ENCODE measurements at regions of chr15 and their contacts with region 1.

Region 1: GRCh38 chr15:61118885-61119284 is 110.2 kb downstream of the RORA start:
- DNase-seq: peak in 1 of 2 experiments; percentile 21
- H3K4me3 ChIP-seq: no peak overlapping the region
- H3K27ac ChIP-seq: no peak overlapping the region
- H3K4me1 ChIP-seq: peaks cover 0 to 4% (median 2%) of the 10 kb centered on the region in 4 experiments; a peak in 2 of 7 replicates
- H3K27me3 ChIP-seq: no peaks in the 10 kb centered on the region; a peak in 1 of 7 replicates
- CTCF ChIP-seq: peak; percentile 45 to 66 (median 63)
- EP300 ChIP-seq: no peak
- POLR2A ChIP-seq: no peak
- RAD21 ChIP-seq: peak; percentile 25 to 57; a peak in 3 of 4 replicates

Region 2: GRCh38 chr15:61080221-61081026 is 38.5 kb before region 1 on chr15:
- CTCF ChIA-PET with region 1: interaction called, 12 read pairs
- POLR2A ChIA-PET with region 1: no interaction called
- DNase-seq: no peak
- H3K4me3 ChIP-seq: no peak overlapping the region
- H3K27ac ChIP-seq: no peak overlapping the region
- H3K4me1 ChIP-seq: peaks cover 4 to 7% (median 4%) of the 10 kb centered on the region in 4 experiments; a peak in 4 of 7 replicates
- H3K27me3 ChIP-seq: no peaks in the 10 kb centered on the region
- CTCF ChIP-seq: no peak
- EP300 ChIP-seq: no peak
- POLR2A ChIP-seq: no peak
- RAD21 ChIP-seq: no peak

Region 3: GRCh38 chr15:61097043-61097442 is 21.8 kb before region 1 on chr15:
- CTCF ChIA-PET with region 1: interaction called, 10 read pairs
- POLR2A ChIA-PET with region 1: interaction called, 3 read pairs
- DNase-seq: no peak
- H3K4me3 ChIP-seq: no peak overlapping the region
- H3K27ac ChIP-seq: no peak overlapping the region
- H3K4me1 ChIP-seq: no peaks in the 10 kb centered on the region
- H3K27me3 ChIP-seq: no peaks in the 10 kb centered on the region
- CTCF ChIP-seq: no peak
- EP300 ChIP-seq: no peak
- POLR2A ChIP-seq: no peak
- RAD21 ChIP-seq: no peak

Region 4: GRCh38 chr15:61137105-61137792 is 18.4 kb after region 1 on chr15:
- CTCF ChIA-PET with region 1: interaction called, 11 read pairs
- POLR2A ChIA-PET with region 1: no interaction called
- DNase-seq: no peak
- H3K4me3 ChIP-seq: no peak overlapping the region
- H3K27ac ChIP-seq: no peak overlapping the region
- H3K4me1 ChIP-seq: peaks cover 0 to 4% (median 3%) of the 10 kb centered on the region in 4 experiments; a peak in 4 of 7 replicates
- H3K27me3 ChIP-seq: no peaks in the 10 kb centered on the region
- CTCF ChIP-seq: no peak
- EP300 ChIP-seq: no peak
- POLR2A ChIP-seq: no peak
- RAD21 ChIP-seq: no peak

Region 5: DNA sequence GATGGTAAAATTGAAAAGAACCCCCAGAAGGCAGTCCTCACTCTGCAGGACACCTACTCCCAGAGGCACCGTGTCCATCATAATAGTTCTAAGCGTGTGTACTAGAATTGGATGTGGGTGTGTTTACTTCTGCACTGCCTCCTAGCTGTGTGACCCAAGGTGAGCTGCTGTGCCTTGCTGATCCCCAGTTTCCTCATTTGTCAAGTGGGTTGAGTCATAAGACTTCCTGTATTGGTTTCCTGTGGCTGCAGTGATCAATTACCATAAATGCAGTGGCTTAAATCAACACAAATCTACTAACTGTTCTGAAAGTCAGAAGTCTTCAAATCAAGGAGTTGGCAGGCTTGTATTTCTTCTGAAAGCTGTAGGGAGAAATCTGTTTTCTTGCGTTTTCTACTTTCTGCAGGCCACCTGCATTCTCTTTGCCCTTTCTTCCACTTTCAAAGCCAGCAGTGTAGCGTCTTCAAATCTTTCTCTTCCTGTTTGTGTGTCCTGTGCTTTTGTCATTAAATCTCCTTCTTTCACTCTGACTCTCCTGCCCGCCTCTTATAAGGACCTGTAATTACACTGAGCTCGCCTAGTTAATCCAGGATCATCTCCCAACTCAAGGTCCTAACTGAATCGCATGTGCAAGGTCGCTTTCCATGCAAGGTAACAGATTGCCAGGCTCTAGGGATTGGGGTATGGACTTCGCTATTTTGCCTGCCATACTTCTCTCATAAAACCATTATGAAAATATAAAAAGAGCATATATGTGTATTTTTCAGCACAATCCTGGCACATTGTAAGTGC is 51.2 kb after region 1 on chr15:
- CTCF ChIA-PET with region 1: interaction called, 10 read pairs
- POLR2A ChIA-PET with region 1: no interaction called
- DNase-seq: no peak
- H3K4me3 ChIP-seq: no peak overlapping the region
- H3K27ac ChIP-seq: no peak overlapping the region
- H3K4me1 ChIP-seq: peaks cover 10 to 34% (median 29%) of the 10 kb centered on the region in 4 experiments
- H3K27me3 ChIP-seq: no peaks in the 10 kb centered on the region
- CTCF ChIP-seq: no peak
- EP300 ChIP-seq: no peak
- POLR2A ChIP-seq: no peak
- RAD21 ChIP-seq: no peak

Region 6: GRCh38 chr15:61266921-61267320 is 148.0 kb after region 1 on chr15:
- CTCF ChIA-PET with region 1: no interaction called
- POLR2A ChIA-PET with region 1: no interaction called
- DNase-seq: no peak
- H3K4me3 ChIP-seq: no peak overlapping the region
- H3K27ac ChIP-seq: no peak overlapping the region
- H3K4me1 ChIP-seq: no peaks in the 10 kb centered on the region; a peak in 1 of 7 replicates
- H3K27me3 ChIP-seq: no peaks in the 10 kb centered on the region
- CTCF ChIP-seq: no peak
- EP300 ChIP-seq: no peak
- POLR2A ChIP-seq: no peak
- RAD21 ChIP-seq: no peak

Measured in H1 (cell line).